ENCODE measurements at regions of chr21 and their contacts with region 1.

Region 1: DNA sequence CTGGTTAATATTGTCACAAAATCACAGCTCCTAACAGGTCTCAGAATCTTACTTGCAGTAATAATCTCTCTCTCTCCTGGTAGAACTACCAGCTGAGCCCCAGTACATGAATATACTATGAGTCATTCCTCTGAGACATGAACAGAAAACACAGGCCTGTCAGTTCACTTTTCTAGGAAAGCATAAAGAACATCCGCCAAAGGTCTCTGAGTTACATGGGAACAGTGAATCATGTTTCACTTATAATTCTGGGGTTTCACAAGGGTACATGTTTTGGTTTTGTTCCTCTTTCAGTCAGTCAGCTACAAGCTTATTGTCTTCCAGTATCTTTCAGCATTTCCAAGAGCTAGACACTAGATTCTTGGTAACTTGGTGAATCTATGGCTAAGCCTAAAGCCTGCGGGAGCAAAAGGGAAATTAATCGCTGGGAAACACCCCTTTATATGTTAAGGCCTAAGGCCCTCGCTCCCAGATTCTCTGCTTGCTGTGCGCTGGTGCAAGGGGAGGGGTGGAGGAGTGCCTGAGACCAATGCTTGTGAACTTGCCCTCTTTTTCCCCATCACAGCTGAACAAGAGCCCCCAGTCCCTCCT is 31.7 kb downstream of the IFNGR2 start:
- DNase-seq: peak; percentile 33
- H3K4me3 Mint-ChIP-seq: peak overlapping the region; percentile 13
- H3K27ac Mint-ChIP-seq: peak overlapping the region; percentile 33
- H3K4me1 Mint-ChIP-seq: peaks cover 33% of the 10 kb centered on the region
- H3K27me3 Mint-ChIP-seq: peaks cover 4% of the 10 kb centered on the region

Region 2: GRCh38 chr21:32929633-32930038 is 505.2 kb before region 1 on chr21:
- intact Hi-C with region 1: loop called (anchors 10 kb)
- DNase-seq: no peak
- H3K4me3 Mint-ChIP-seq: no peak overlapping the region
- H3K27ac Mint-ChIP-seq: no peak overlapping the region
- H3K4me1 Mint-ChIP-seq: peaks cover 31% of the 10 kb centered on the region
- H3K27me3 Mint-ChIP-seq: no peaks in the 10 kb centered on the region

Region 3: GRCh38 chr21:33229784-33230544 is 204.9 kb before region 1 on chr21 and contains the start of gene IFNAR2:
- intact Hi-C with region 1: loop called (anchors 1 kb)
- DNase-seq: peak; percentile 68
- H3K4me3 Mint-ChIP-seq: peak within 1 kb of the TSS; percentile 88
- H3K27ac Mint-ChIP-seq: peak within 1 kb of the TSS; percentile 87
- H3K4me1 Mint-ChIP-seq: peaks cover 49% of the 10 kb centered on the region
- H3K27me3 Mint-ChIP-seq: peaks cover 5% of the 10 kb centered on the region
- total RNA-seq, gene IFNAR2: 33.3 and 33.5 TPM in 2 replicates

Region 4: DNA sequence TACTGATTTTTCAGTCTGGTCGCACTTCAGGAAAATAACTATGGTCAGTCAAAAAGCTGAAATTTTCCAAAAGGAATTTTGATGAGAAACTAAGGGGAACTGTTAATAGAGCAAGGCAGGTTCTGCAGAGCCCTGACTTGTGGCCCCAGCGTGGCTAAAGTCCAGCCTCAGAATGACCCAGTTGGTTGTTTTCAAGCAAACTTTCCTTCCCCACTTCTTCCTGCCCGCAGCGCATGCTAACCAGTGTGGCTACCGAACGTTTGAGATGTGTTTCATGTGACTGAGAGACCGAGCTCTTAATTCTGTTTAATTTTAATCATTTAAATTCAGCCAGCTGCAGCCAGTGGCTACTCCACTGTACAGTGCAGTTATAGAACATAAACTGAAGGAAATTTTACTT is 174.9 kb before region 1 on chr21:
- intact Hi-C with region 1: loop called (anchors 5 kb)
- DNase-seq: no peak
- H3K4me3 Mint-ChIP-seq: no peak overlapping the region
- H3K27ac Mint-ChIP-seq: no peak overlapping the region
- H3K4me1 Mint-ChIP-seq: peaks cover 47% of the 10 kb centered on the region
- H3K27me3 Mint-ChIP-seq: no peaks in the 10 kb centered on the region

Region 5: GRCh38 chr21:33360881-33361602 is 73.8 kb before region 1 on chr21:
- intact Hi-C with region 1: loop called (anchors 1 kb)
- DNase-seq: peak; percentile 72
- H3K4me3 Mint-ChIP-seq: peak overlapping the region; percentile 83
- H3K27ac Mint-ChIP-seq: peak overlapping the region; percentile 64
- H3K4me1 Mint-ChIP-seq: peaks cover 21% of the 10 kb centered on the region
- H3K27me3 Mint-ChIP-seq: no peaks in the 10 kb centered on the region

Region 6: GRCh38 chr21:33403779-33404585 is 30.9 kb before region 1 on chr21:
- intact Hi-C with region 1: loop called (anchors 1 kb)
- DNase-seq: no peak
- H3K4me3 Mint-ChIP-seq: peak overlapping the region; percentile 83
- H3K27ac Mint-ChIP-seq: peak overlapping the region; percentile 61
- H3K4me1 Mint-ChIP-seq: peaks cover 34% of the 10 kb centered on the region
- H3K27me3 Mint-ChIP-seq: peaks cover 74% of the 10 kb centered on the region

Measured in activated T-helper 1 cell treated with anti-CD3 and anti-CD28 coated beads, Interleukin-12 subunit alpha, Interleukin-12 subunit beta, Interleukin-2, Interleukin-4 antibody, amounts not matched to agents 30 ng/mL and 10 ng/mL and 1 ng/mL, durations not matched to agents 14 hours and 24 hours and 36 hours (primary cell).